A549 (cell line): ENCODE measurements at regions of chr2 and their contacts with region 1.

Region 1: DNA sequence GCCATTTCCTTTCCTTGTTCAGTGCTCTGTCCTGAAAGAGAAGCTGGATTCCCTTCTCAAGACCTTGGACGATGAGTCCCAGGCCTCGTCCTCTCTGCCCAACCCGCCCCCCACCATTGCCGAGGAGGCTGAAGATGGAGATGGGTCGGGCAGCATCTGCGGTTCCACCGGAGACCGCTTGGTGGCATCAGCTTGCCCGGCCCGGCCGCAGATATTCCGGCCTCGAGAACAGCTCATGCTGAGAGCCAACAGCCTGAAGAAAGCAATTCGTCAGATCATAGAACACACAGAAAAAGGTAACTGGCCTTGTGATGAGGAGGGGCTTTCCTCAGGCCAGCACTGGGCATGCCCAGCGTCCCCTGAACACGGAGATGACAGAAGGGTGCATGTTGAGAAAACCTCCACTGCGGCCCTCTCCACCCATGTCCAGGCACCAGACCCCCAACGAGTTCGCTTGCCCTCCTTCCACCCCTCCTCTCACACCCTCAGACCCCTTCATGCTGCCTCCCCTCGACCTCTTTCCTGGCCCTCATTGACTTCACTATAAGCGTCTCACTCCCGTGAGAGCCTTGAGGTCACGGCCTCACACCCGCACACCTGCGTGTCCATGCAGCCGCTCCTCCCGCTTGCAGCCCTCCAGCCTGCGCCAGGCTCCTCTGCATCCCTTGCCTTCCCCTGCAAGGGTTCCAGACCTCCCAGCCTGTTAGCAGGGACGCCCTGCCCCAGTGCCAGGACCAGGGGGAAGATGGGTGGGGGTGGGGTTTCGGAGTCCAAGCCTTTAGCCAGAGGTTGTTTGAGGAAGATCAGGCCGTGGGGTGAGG is 95.0 kb downstream of the DGKD start:
- DNase-seq: peak; percentile 68 to 77
- ATAC-seq: peak; percentile 67 to 74
- H3K4me3 ChIP-seq: no peak overlapping the region
- H3K27ac ChIP-seq: peak overlapping the region; percentile 93 to 94
- H3K4me1 ChIP-seq: peaks cover 62% of the 10 kb centered on the region
- CTCF ChIP-seq: peak; percentile 65
- EP300 ChIP-seq: no peak
- POLR2A ChIP-seq: no peak
- RAD21 ChIP-seq: peak; percentile 74 to 79

Region 2: DNA sequence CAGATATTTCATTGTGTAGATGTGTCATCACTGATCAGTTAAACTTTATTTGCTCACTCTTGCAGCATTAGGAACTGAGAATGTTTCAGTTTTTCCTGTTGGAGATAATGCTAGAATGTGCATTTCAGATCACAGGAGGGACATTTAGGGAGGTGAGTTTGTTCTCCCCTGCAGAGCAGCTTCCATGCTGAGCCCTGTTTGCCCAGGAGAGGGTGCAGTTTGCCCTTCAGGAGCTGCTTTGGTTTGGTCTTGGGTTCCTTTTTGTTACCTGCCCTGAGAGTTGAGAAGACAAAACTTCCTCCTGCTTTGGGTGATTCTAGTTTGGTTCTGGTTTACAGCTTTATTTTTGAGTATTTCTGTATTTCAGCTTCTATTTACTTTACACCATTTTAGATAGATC is 45.1 kb before region 1 on chr2:
- CTCF ChIA-PET with region 1: interaction called, 166 read pairs
- POLR2A ChIA-PET with region 1: no interaction called
- DNase-seq: peak; percentile 60 to 77
- ATAC-seq: peak; percentile 45 to 71; a peak in 3 of 6 replicates
- H3K4me3 ChIP-seq: no peak overlapping the region
- H3K27ac ChIP-seq: peak overlapping the region; percentile 64 to 82
- H3K4me1 ChIP-seq: peaks cover 74% of the 10 kb centered on the region
- CTCF ChIP-seq: peak; percentile 76
- EP300 ChIP-seq: no peak
- POLR2A ChIP-seq: no peak
- RAD21 ChIP-seq: peak; percentile 80 to 88

Region 3: GRCh38 chr2:233436191-233436581 is 13.1 kb before region 1 on chr2:
- CTCF ChIA-PET with region 1: interaction called, 356 read pairs
- POLR2A ChIA-PET with region 1: no interaction called
- DNase-seq: no peak
- ATAC-seq: no peak; a peak in 1 of 6 replicates
- H3K4me3 ChIP-seq: no peak overlapping the region
- H3K27ac ChIP-seq: peak overlapping the region in 1 of 2 experiments; percentile 67; a peak in 3 of 6 replicates
- H3K4me1 ChIP-seq: peaks cover 23% of the 10 kb centered on the region
- CTCF ChIP-seq: no peak
- EP300 ChIP-seq: no peak
- POLR2A ChIP-seq: no peak
- RAD21 ChIP-seq: no peak

Region 4: DNA sequence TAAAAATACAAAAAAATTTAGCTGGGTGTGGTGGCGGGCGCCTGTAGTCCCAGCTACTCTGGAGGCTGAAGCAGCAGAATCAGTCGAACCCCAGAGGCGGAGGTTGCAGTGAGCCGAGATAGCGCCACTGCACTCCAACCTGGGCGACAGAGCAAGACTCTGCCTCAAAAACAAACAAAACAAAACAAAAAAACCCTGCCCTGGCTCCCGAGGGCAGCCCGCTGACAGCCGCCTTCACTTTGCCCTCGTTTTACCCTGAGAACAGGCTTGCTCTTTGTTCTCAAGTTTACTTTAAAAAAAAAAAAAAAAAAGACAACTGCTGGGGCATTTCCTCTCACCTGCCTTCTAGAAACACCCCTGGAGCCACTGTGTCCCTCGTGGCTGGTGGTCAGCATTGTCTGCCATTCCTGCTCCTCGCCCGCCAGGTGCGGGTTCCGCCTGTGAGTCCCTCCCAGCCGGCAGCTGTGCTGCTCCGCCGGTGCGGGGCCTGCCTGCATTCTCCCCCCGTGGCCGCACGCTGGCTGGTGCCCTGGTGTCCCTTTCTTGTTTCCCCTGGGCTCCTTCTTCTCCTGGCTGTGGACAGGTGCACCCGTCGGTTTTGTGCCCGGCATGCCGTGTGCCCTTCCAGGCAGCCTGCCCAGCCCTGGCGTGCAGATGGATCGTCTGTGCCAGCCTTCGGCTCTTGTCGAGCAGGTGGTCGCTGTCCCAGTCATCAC is 11.6 kb after region 1 on chr2:
- CTCF ChIA-PET with region 1: interaction called, 22 read pairs
- POLR2A ChIA-PET with region 1: no interaction called
- DNase-seq: no peak
- ATAC-seq: no peak
- H3K4me3 ChIP-seq: no peak overlapping the region
- H3K27ac ChIP-seq: peak overlapping the region in 1 of 2 experiments; percentile 80; a peak in 4 of 6 replicates
- H3K4me1 ChIP-seq: peaks cover 48% of the 10 kb centered on the region; the same call in 2 of the 3 replicates
- CTCF ChIP-seq: no peak
- EP300 ChIP-seq: no peak
- POLR2A ChIP-seq: no peak
- RAD21 ChIP-seq: no peak

Region 5: DNA sequence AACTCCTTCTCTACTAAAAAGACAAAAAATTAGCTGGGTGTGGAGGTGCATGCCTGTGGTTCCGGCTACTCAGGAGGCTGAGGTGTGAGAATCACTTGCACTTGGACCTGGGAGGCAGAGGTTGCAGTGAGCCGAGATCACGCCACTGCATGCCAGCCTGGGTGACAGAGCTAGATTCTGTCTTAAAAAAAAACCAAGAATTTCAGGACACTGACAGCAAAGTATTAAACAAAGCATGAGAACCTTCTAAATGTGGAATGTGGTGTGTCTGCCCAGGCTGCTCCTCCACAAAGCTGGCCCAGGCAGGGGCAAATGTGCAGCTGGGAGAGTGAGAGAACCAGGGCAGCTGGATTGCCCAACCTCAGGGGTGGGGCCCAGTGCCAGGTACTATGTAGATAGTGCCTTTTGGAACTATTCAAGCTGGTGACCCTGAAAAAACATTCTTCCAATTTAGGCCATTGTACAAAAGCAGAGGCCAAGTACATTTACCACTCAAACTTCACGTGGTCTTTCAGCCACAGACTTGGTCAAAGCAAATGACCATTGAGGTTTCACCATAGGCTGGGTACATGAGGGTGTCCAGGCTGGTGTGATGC is 256.7 kb after region 1 on chr2:
- CTCF ChIA-PET with region 1: interaction called, 16 read pairs
- POLR2A ChIA-PET with region 1: no interaction called
- DNase-seq: peak in 1 of 2 experiments; percentile 70
- ATAC-seq: peak; percentile 49 to 59; a peak in 5 of 6 replicates
- H3K4me3 ChIP-seq: no peak overlapping the region
- H3K27ac ChIP-seq: peak overlapping the region; percentile 98 to 100
- H3K4me1 ChIP-seq: peaks cover 58% of the 10 kb centered on the region
- CTCF ChIP-seq: no peak
- EP300 ChIP-seq: 0 out of 5 replicates have a peak, but pooled peaks of 1 of the 2 experiments have one; percentile 16
- POLR2A ChIP-seq: no peak
- RAD21 ChIP-seq: no peak

Region 6: DNA sequence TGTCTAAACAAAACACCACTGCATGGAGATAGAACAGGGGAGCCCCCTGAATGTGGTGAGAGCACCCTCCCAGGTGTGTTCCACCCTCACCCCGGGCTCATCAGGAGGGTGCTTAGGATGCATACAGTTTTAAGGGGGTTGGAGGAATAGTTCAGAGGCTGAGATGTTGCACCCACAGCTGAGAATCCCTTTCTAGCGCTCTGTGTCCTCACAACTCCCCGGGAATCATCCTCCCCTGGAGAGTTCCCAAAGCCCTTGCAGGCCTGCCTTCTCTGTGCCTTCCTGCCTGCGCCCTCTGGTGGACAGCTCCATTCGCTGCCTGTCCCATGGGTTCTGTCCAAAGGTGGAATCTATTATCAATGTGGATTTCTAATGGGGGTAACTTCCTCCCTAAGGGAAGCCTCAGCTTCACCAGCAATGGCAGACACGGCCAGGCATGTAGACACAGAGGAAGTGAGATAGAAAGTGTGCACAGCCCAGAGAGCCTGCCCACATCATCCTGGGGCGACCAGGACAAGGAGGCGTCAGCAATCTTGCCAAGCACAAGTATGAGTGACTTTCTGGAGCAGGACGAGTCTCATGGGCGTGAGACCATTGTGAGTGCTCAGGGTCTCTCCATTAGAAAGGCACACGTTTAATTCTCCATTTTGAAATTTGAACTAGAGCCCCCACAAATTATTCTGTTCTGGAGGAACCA is 262.2 kb after region 1 on chr2:
- CTCF ChIA-PET with region 1: interaction called, 16 read pairs
- POLR2A ChIA-PET with region 1: no interaction called
- DNase-seq: peak; percentile 54 to 90
- ATAC-seq: peak; percentile 83 to 89
- H3K4me3 ChIP-seq: no peak overlapping the region
- H3K27ac ChIP-seq: peak overlapping the region; percentile 98 to 100
- H3K4me1 ChIP-seq: peaks cover 52% of the 10 kb centered on the region
- CTCF ChIP-seq: peak; percentile 84
- EP300 ChIP-seq: no peak
- POLR2A ChIP-seq: no peak
- RAD21 ChIP-seq: peak; percentile 92 to 95

Region 7: GRCh38 chr2:233838726-233839446 is 389.6 kb after region 1 on chr2:
- CTCF ChIA-PET with region 1: interaction called, 83 read pairs
- POLR2A ChIA-PET with region 1: no interaction called
- DNase-seq: no peak
- ATAC-seq: peak in 1 of 2 experiments; percentile 21; a peak in 3 of 6 replicates
- H3K4me3 ChIP-seq: no peak overlapping the region
- H3K27ac ChIP-seq: peak overlapping the region; percentile 58 to 91
- H3K4me1 ChIP-seq: peaks cover 85% of the 10 kb centered on the region
- CTCF ChIP-seq: no peak
- EP300 ChIP-seq: no peak
- POLR2A ChIP-seq: no peak
- RAD21 ChIP-seq: no peak